HepG2 (cell line): ENCODE measurements at regions of chr14 and their contacts with region 1.

Region 1: GRCh38 chr14:63388763-63389431 is 70.2 kb upstream of the GPHB5 start:
- DNase-seq: peak; percentile 37
- ATAC-seq: peak; percentile 97
- H3K4me3 ChIP-seq: no peak overlapping the region
- H3K27ac ChIP-seq: no peak overlapping the region
- H3K4me1 ChIP-seq: no peaks in the 10 kb centered on the region
- H3K27me3 ChIP-seq: no peaks in the 10 kb centered on the region
- CTCF ChIP-seq: peak; percentile 79
- EP300 ChIP-seq: no peak
- POLR2A ChIP-seq: no peak
- RAD21 ChIP-seq: peak; percentile 65

Region 2: DNA sequence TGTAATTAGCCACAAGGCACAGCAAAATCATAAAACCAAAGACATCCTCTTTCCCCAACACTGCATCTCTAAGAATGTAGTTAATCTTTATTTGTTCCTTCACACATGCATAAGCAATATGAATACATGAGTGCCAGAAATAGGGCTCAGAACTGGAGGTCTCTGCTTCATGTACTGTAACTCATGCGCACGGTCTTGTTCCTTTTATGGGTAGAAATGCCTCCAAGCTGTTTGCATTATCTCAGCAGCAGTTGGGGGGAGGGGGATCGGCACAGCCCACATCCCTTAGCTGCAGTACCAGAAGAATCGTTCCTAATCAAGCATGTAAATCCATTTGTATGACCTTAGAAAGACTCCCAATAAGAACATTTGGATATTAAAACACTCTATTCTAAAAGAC is 164.7 kb before region 1 on chr14:
- CTCF ChIA-PET with region 1: no interaction called
- POLR2A ChIA-PET with region 1: no interaction called
- in situ Hi-C with region 1: no loop called
- intact Hi-C with region 1: no loop called
- DNase-seq: no peak
- ATAC-seq: no peak
- H3K4me3 ChIP-seq: no peak overlapping the region
- H3K27ac ChIP-seq: no peak overlapping the region
- H3K4me1 ChIP-seq: no peaks in the 10 kb centered on the region
- H3K27me3 ChIP-seq: no peaks in the 10 kb centered on the region
- CTCF ChIP-seq: no peak
- EP300 ChIP-seq: no peak
- POLR2A ChIP-seq: no peak
- RAD21 ChIP-seq: no peak

Region 3: GRCh38 chr14:63248211-63248610 is 140.7 kb before region 1 on chr14:
- CTCF ChIA-PET with region 1: no interaction called
- POLR2A ChIA-PET with region 1: no interaction called
- in situ Hi-C with region 1: no loop called
- intact Hi-C with region 1: no loop called
- DNase-seq: no peak
- ATAC-seq: no peak
- H3K4me3 ChIP-seq: no peak overlapping the region
- H3K27ac ChIP-seq: no peak overlapping the region
- H3K4me1 ChIP-seq: no peaks in the 10 kb centered on the region
- H3K27me3 ChIP-seq: no peaks in the 10 kb centered on the region
- CTCF ChIP-seq: no peak
- EP300 ChIP-seq: no peak
- POLR2A ChIP-seq: no peak
- RAD21 ChIP-seq: no peak

Region 4: GRCh38 chr14:63543000-63543825 is 154.3 kb after region 1 on chr14 and contains the start of gene PPP2R5E:
- CTCF ChIA-PET with region 1: interaction called, 10 read pairs
- POLR2A ChIA-PET with region 1: interaction called, 3 read pairs
- in situ Hi-C with region 1: loop called (anchors 5 kb)
- intact Hi-C with region 1: loop called (anchors 1 kb)
- DNase-seq: peak; percentile 97
- ATAC-seq: peak; percentile 97
- H3K4me3 ChIP-seq: peak within 1 kb of the TSS; percentile 87 to 91 (median 88)
- H3K27ac ChIP-seq: peak within 1 kb of the TSS; percentile 88
- H3K4me1 ChIP-seq: peaks cover 33% of the 10 kb centered on the region
- H3K27me3 ChIP-seq: no peaks in the 10 kb centered on the region; a peak in 1 of 5 replicates
- CTCF ChIP-seq: 0 out of 2 replicates have a peak, but pooled peaks have one; percentile 6
- EP300 ChIP-seq: no peak
- POLR2A ChIP-seq: peak; percentile 79 to 80
- RAD21 ChIP-seq: peak; percentile 19; the same call in 1 of the 2 replicates
- total RNA-seq, gene PPP2R5E: 11.0 and 22.5 TPM in 2 replicates

Region 5: DNA sequence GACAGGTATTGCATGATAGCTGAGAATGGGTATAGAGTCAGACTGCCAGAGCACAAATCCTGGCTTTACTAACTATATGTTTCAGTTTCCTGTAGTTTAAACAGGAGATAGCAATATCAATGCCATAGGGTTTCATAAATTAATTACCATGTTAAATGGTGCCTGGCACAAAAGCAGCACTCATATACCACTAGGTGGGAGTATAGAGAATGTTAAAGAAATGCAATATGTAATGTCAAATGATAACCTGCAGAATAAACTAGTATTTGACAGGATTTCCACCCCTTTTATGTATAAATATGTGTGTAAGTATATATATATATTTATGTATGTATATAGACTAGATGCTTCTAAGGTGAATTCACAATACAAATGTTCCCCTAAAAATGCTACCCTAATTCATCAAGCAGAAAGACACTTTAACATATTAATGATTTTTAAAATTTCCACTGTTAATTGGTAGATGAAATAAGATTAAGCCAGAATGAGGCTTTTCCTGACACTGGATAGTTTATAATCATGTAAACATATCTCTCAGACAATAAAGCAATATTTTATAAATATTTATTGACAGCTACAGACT is 244.1 kb after region 1 on chr14:
- CTCF ChIA-PET with region 1: interaction called, 5 read pairs
- POLR2A ChIA-PET with region 1: no interaction called
- in situ Hi-C with region 1: no loop called
- intact Hi-C with region 1: loop called (anchors 2 kb)
- DNase-seq: peak; percentile 9
- ATAC-seq: peak; percentile 56; the same call in 2 of the 3 replicates
- H3K4me3 ChIP-seq: no peak overlapping the region
- H3K27ac ChIP-seq: no peak overlapping the region
- H3K4me1 ChIP-seq: 0 out of 2 replicates have a peak, but pooled peaks cover 3% of the 10 kb centered on the region
- H3K27me3 ChIP-seq: no peaks in the 10 kb centered on the region
- CTCF ChIP-seq: peak; percentile 39
- EP300 ChIP-seq: no peak
- POLR2A ChIP-seq: no peak
- RAD21 ChIP-seq: no peak

Region 6: GRCh38 chr14:63641473-63642228 is 252.8 kb after region 1 on chr14 and contains the start of gene WDR89:
- CTCF ChIA-PET with region 1: no interaction called
- POLR2A ChIA-PET with region 1: interaction called, 3 read pairs
- in situ Hi-C with region 1: no loop called
- intact Hi-C with region 1: loop called (anchors 1 kb)
- DNase-seq: peak; percentile 99
- ATAC-seq: peak; percentile 96
- H3K4me3 ChIP-seq: peak within 1 kb of the TSS; percentile 66 to 77 (median 74)
- H3K27ac ChIP-seq: peak within 1 kb of the TSS; percentile 95
- H3K4me1 ChIP-seq: peaks cover 40% of the 10 kb centered on the region
- H3K27me3 ChIP-seq: no peaks in the 10 kb centered on the region
- CTCF ChIP-seq: peak; percentile 73
- EP300 ChIP-seq: 0 out of 4 replicates have a peak, but pooled peaks of 1 of the 2 experiments have one; percentile 12
- POLR2A ChIP-seq: peak; percentile 75 to 91
- RAD21 ChIP-seq: peak; percentile 69
- total RNA-seq, gene WDR89: 20.1 and 37.0 TPM in 2 replicates

Region 7: DNA sequence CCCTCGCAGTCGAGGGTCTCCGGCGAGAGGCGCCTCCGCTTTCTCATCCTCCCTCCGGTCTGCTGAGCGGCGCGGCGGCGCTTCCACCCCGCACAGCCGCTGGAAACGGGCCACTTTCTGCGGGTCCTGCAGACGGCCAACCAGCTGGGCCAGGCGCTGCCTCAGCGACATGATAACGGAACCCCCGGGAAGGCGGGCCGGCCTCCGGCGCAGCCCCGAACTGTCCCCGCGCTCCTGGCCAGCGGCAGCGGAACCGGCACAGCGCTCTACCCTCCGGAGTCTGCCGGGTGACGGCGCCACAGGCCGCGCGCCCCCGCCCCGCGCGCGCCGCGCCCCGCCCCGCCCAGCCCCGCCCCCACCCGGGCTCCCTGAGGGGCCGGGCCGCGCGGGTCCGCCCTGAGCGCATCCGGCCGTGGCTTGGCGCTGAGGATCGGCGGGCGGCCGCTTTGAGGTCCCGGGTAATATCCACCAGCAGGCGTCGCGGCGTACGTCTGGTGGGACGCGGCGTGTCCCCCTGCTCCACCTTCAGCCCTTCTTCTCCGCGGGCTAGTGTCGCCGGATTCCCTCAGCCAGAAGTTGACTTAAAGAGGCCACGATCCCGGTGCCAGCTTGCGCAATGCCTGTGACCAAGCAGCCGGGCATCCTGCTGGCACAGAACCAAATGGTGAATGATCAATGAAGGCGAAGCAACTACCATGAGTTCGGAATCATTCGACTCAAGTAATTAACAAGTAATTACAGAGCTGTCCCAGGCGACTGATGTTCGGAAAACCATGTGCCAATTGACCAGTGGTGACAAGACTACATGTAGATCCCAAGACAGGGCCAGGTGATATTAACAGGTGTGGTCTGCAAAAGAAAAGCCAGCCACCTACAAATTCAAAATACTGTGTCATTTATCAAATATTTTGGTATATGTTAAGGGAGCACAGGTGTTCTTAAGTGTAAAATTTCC is 339.2 kb after region 1 on chr14 and contains the start of gene SGPP1:
- CTCF ChIA-PET with region 1: no interaction called
- POLR2A ChIA-PET with region 1: no interaction called
- in situ Hi-C with region 1: no loop called
- intact Hi-C with region 1: loop called (anchors 5 kb)
- DNase-seq: peak; percentile 65
- ATAC-seq: peak; percentile 87
- H3K4me3 ChIP-seq: peak within 1 kb of the TSS; percentile 70 to 92 (median 90)
- H3K27ac ChIP-seq: peak within 1 kb of the TSS; percentile 60
- H3K4me1 ChIP-seq: peaks cover 43% of the 10 kb centered on the region
- H3K27me3 ChIP-seq: no peaks in the 10 kb centered on the region
- CTCF ChIP-seq: peak; percentile 76
- EP300 ChIP-seq: no peak
- POLR2A ChIP-seq: peak; percentile 32 to 69; a peak in 3 of 4 replicates
- RAD21 ChIP-seq: peak; percentile 42; the same call in 1 of the 2 replicates
- total RNA-seq, gene SGPP1: 4.8 and 6.4 TPM in 2 replicates

Region 8: GRCh38 chr14:63770187-63770807 is 381.4 kb after region 1 on chr14:
- CTCF ChIA-PET with region 1: no interaction called
- POLR2A ChIA-PET with region 1: no interaction called
- in situ Hi-C with region 1: loop called (anchors 25 kb)
- intact Hi-C with region 1: loop called (anchors 1 kb)
- DNase-seq: peak; percentile 57
- ATAC-seq: peak; percentile 91
- H3K4me3 ChIP-seq: no peak overlapping the region
- H3K27ac ChIP-seq: no peak overlapping the region
- H3K4me1 ChIP-seq: peaks cover 22% of the 10 kb centered on the region
- H3K27me3 ChIP-seq: no peaks in the 10 kb centered on the region
- CTCF ChIP-seq: peak; percentile 68
- EP300 ChIP-seq: no peak
- POLR2A ChIP-seq: no peak
- RAD21 ChIP-seq: peak; percentile 42; the same call in 1 of the 2 replicates